ENCODE measurements at regions of chr11 and their contacts with region 1.

Region 1: DNA sequence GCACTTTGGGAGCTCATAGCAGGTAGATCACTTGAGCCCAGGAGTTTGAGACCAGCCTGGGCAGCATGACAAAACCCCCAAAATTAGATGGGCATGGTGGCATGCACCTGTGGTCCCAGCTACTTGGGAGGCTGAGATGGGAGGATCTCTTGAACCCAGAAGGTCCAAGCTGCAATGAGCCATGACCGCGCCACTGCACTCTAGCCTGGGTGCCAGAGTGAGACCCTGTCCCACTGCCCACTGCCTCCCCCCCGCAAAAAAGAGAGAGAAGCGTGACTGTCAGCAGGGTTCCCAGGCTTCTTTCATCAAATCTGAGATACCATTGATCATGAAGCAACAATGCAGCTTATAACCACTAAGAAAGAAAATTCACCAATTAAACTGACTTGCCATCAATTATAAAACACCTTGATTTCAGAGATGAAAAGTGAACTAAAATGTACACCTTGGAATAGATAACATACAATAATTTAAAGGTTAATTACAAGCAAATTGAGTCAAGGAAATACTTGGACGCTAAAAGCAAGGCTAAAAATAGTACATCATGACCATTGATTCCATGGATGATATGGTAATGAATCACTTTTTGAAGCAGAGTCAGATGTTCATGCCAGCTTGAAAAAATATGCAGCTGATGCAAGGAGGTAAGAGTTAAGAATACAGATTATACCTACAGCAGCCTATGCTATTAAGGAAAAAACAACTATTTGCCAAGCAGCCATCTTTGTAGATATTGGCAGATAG is 90.8 kb upstream of the ALKBH3 start:
- DNase-seq: no peak
- ATAC-seq: no peak
- H3K4me3 ChIP-seq: no peak overlapping the region
- H3K27ac ChIP-seq: no peak overlapping the region
- H3K4me1 ChIP-seq: peaks cover 0 to 21% (median 0%) of the 10 kb centered on the region in 9 donors
- H3K27me3 ChIP-seq: no peaks in the 10 kb centered on the region
- CTCF ChIP-seq: no peak

Region 2: DNA sequence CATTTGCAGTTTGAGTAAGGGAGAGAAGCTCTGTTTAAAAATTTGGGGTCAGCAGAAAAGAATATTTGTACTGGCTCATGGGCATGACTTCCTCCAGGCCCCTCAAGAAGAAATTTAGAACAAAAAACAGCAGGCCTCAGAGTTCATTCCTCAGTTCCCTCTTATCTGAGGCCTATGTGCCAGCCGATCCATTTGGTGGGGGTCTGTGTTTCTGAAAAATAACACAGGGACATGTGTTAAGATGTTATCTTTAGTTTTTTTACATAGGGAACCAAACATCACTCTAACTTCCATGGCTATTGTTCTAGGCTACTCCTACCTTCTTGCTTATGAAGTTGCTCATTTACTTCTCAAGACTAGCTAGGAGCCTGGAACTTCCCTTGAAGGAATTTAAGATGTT is 125.6 kb before region 1 on chr11:
- intact Hi-C with region 1: no loop called
- DNase-seq: no peak
- ATAC-seq: no peak
- H3K4me3 ChIP-seq: no peak overlapping the region
- H3K27ac ChIP-seq: no peak overlapping the region
- H3K4me1 ChIP-seq: no peaks in the 10 kb centered on the region
- H3K27me3 ChIP-seq: peaks cover 0 to 16% (median 1%) of the 10 kb centered on the region in 7 donors
- CTCF ChIP-seq: no peak

Region 3: DNA sequence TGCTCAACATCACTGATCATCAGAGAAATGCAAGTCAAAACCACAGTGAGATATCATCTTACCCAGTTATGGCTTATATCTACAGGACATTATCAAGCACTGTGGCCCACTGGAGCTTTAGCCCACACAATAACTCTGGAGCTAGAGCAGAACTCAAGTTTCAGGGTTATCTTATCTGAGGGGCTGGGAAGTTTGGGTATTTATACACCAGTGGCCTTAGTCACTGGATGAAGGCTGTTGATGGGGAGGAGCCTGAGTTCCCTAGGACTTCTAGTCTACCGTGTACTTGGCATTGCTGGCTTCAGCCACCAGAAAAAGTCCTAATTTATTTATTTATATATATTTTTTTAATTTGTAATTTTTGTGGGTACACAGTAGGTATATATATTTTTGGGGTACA is 90.0 kb before region 1 on chr11:
- intact Hi-C with region 1: loop called in 1 of 10 experiments (anchors 5 kb)
- DNase-seq: no peak
- ATAC-seq: peak in 1 of 8 donors; percentile 41
- H3K4me3 ChIP-seq: no peak overlapping the region
- H3K27ac ChIP-seq: no peak overlapping the region
- H3K4me1 ChIP-seq: peaks cover 0 to 12% (median 6%) of the 10 kb centered on the region in 9 donors
- H3K27me3 ChIP-seq: no peaks in the 10 kb centered on the region
- CTCF ChIP-seq: no peak

Region 4: GRCh38 chr11:44556735-44557409 is 767.0 kb after region 1 on chr11:
- intact Hi-C with region 1: no loop called
- DNase-seq: peak; percentile 60 to 69
- ATAC-seq: peak; percentile 66 to 95 (median 86)
- H3K4me3 ChIP-seq: no peak overlapping the region
- H3K27ac ChIP-seq: peak overlapping the region in 1 of 10 donors; percentile 4
- H3K4me1 ChIP-seq: peaks cover 0 to 28% (median 6%) of the 10 kb centered on the region in 9 donors
- H3K27me3 ChIP-seq: no peaks in the 10 kb centered on the region
- CTCF ChIP-seq: peak; percentile 79 to 90 (median 83)